Activated CD4-positive, alpha-beta memory T cell treated with anti-CD3 and anti-CD28 coated beads for 36 hours (primary cell): ENCODE measurements at regions of chr1 and their contacts with region 1.

Region 1: DNA sequence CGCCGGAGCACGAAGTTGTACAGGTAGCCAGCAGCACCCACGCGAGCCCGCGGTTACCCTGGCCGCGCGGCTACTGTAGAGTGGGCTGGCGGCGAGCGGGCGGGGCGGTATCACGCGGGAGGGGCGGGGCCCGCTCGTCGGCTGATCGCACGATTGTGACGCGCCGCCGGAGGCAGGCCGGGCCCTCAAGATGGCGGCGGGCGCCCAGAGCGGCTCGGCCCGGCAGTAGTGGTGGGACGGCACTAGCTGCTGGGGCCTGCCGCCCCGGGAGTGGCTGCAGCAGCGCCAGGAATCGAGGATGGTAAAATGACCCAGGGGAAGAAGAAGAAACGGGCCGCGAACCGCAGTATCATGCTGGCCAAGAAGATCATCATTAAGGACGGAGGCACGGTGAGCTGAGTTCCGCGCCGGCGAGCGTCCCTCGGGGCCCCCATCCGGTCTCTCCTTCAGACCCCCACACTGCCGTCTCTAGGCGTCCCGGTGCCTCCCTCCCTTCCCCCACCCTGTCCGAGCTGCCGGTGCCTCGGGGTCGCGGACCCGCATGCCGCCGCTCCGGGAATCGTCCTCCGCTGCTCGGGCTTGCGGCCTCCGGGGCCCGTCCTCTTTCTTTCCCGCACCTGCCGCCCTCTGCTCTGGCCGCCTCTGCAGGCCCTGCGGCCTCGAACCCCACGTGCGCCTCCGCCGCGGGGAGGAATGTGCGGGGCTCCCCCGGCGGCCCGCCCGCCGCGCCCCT is 68.3 kb downstream of the SLC35A3 start:
- DNase-seq: peak; percentile 93
- H3K4me3 Mint-ChIP-seq: peak overlapping the region; percentile 97
- H3K27ac Mint-ChIP-seq: peak overlapping the region; percentile 100
- H3K4me1 Mint-ChIP-seq: peaks cover 54% of the 10 kb centered on the region
- H3K27me3 Mint-ChIP-seq: peaks cover 2% of the 10 kb centered on the region

Region 2: GRCh38 chr1:99621340-99621901 is 416.7 kb before region 1 on chr1:
- CTCF ChIA-PET with region 1: no interaction called
- POLR2A ChIA-PET with region 1: no interaction called
- intact Hi-C with region 1: no loop called
- DNase-seq: no peak
- H3K4me3 Mint-ChIP-seq: no peak overlapping the region
- H3K27ac Mint-ChIP-seq: no peak overlapping the region
- H3K4me1 Mint-ChIP-seq: no peaks in the 10 kb centered on the region
- H3K27me3 Mint-ChIP-seq: peaks cover 2% of the 10 kb centered on the region

Region 3: DNA sequence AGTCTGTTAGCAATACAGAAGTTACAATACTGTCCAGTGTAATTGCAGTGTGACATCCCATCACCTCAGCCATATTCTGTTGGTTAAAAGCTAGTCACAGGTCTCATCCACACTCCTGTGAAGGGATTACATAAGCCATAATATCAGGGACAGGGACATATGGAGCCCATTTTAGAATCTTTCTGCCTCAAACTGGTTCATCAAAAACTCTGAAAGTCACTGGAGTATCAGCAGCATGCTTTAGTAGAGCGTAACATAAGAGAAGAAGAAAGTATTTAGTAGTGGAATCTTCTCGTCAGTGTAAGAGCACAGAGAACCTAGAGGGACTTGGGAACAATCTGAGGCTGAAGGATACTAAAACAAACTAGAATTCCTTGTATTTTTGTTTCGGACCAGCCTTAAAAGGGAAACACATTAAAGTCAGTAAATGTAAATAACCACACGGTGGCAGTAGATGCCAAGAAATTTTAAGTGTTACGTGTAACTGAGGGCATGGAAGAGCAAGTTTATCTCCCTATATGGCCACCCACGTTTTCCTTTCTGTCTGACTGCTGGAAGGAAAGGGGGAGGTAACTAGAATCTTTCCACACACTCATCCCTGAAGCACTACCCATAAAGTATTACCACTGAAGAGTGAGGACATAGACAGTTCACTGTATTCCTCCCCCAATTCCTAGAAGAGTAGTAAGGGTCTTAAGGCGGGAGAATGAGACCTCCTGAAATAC is 229.5 kb before region 1 on chr1:
- CTCF ChIA-PET with region 1: no interaction called
- POLR2A ChIA-PET with region 1: no interaction called
- intact Hi-C with region 1: loop called (anchors 1 kb)
- DNase-seq: peak; percentile 22
- H3K4me3 Mint-ChIP-seq: peak overlapping the region; percentile 43
- H3K27ac Mint-ChIP-seq: no peak overlapping the region
- H3K4me1 Mint-ChIP-seq: peaks cover 14% of the 10 kb centered on the region
- H3K27me3 Mint-ChIP-seq: peaks cover 14% of the 10 kb centered on the region

Region 4: GRCh38 chr1:99849744-99850458 is 188.2 kb before region 1 on chr1 and contains the start of gene AGL:
- CTCF ChIA-PET with region 1: interaction called, 4 read pairs
- POLR2A ChIA-PET with region 1: interaction called, 4 read pairs
- intact Hi-C with region 1: loop called (anchors 1 kb)
- DNase-seq: peak; percentile 92
- H3K4me3 Mint-ChIP-seq: peak within 1 kb of the TSS; percentile 94
- H3K27ac Mint-ChIP-seq: peak within 1 kb of the TSS; percentile 82
- H3K4me1 Mint-ChIP-seq: peaks cover 27% of the 10 kb centered on the region
- H3K27me3 Mint-ChIP-seq: no peaks in the 10 kb centered on the region
- total RNA-seq, gene AGL: 19.0 to 19.7 TPM

Region 5: DNA sequence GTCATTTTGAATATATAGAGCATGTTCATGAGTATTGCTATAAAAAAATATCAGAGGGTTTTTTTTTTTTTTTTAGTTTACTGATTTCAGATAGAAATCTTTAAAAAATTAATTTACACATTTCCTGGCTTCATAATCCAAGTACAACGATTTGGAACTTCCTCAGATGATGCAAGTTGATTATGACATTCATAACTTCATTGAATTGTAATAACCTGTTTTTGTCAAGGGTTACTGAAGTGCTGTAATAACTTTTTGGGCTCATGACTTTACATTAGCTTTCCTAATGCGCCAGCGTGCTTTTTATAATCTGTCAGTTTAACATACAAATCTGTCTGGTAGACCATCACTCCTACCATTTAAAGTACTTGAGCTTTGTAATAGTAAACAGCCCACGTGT is 13.3 kb after region 1 on chr1:
- CTCF ChIA-PET with region 1: no interaction called
- POLR2A ChIA-PET with region 1: interaction called, 9 read pairs
- intact Hi-C with region 1: loop called (anchors 1 kb)
- DNase-seq: no peak
- H3K4me3 Mint-ChIP-seq: no peak overlapping the region
- H3K27ac Mint-ChIP-seq: no peak overlapping the region
- H3K4me1 Mint-ChIP-seq: peaks cover 58% of the 10 kb centered on the region
- H3K27me3 Mint-ChIP-seq: no peaks in the 10 kb centered on the region

Region 6: GRCh38 chr1:100178091-100178490 is 140.0 kb after region 1 on chr1 and contains the start of gene LRRC39:
- CTCF ChIA-PET with region 1: no interaction called
- POLR2A ChIA-PET with region 1: no interaction called
- intact Hi-C with region 1: no loop called
- DNase-seq: no peak
- H3K4me3 Mint-ChIP-seq: no peak within 1 kb of the TSS
- H3K27ac Mint-ChIP-seq: no peak within 1 kb of the TSS
- H3K4me1 Mint-ChIP-seq: no peaks in the 10 kb centered on the region
- H3K27me3 Mint-ChIP-seq: no peaks in the 10 kb centered on the region
- total RNA-seq, gene LRRC39: 0.17 to 0.64 TPM

Region 7: GRCh38 chr1:100229681-100230443 is 191.8 kb after region 1 on chr1:
- CTCF ChIA-PET with region 1: no interaction called
- POLR2A ChIA-PET with region 1: no interaction called
- intact Hi-C with region 1: loop called (anchors 2 kb)
- DNase-seq: no peak
- H3K4me3 Mint-ChIP-seq: no peak overlapping the region
- H3K27ac Mint-ChIP-seq: no peak overlapping the region
- H3K4me1 Mint-ChIP-seq: peaks cover 20% of the 10 kb centered on the region
- H3K27me3 Mint-ChIP-seq: no peaks in the 10 kb centered on the region

Region 8: GRCh38 chr1:100265931-100266740 is 228.0 kb after region 1 on chr1 and contains the start of gene RTCA:
- CTCF ChIA-PET with region 1: no interaction called
- POLR2A ChIA-PET with region 1: interaction called, 3 read pairs
- intact Hi-C with region 1: loop called (anchors 1 kb)
- DNase-seq: peak; percentile 96
- H3K4me3 Mint-ChIP-seq: peak within 1 kb of the TSS; percentile 100
- H3K27ac Mint-ChIP-seq: peak within 1 kb of the TSS; percentile 97
- H3K4me1 Mint-ChIP-seq: peaks cover 40% of the 10 kb centered on the region
- H3K27me3 Mint-ChIP-seq: no peaks in the 10 kb centered on the region
- total RNA-seq, gene RTCA: 56.6 to 58.2 TPM

Region 9: GRCh38 chr1:100443811-100444571 is 405.9 kb after region 1 on chr1:
- CTCF ChIA-PET with region 1: no interaction called
- POLR2A ChIA-PET with region 1: interaction called, 3 read pairs
- intact Hi-C with region 1: loop called (anchors 2 kb)
- DNase-seq: peak; percentile 65
- H3K4me3 Mint-ChIP-seq: peak overlapping the region; percentile 82
- H3K27ac Mint-ChIP-seq: peak overlapping the region; percentile 98
- H3K4me1 Mint-ChIP-seq: peaks cover 84% of the 10 kb centered on the region
- H3K27me3 Mint-ChIP-seq: no peaks in the 10 kb centered on the region